ENCODE measurements at regions of chr2 and their contacts with region 1.

Region 1: GRCh38 chr2:190849774-190850173 is 30.8 kb upstream of the GLS start:
- DNase-seq: no peak
- H3K4me3 ChIP-seq: no peak overlapping the region
- H3K27ac ChIP-seq: no peak overlapping the region
- H3K4me1 ChIP-seq: no peaks in the 10 kb centered on the region
- H3K27me3 ChIP-seq: no peaks in the 10 kb centered on the region
- CTCF ChIP-seq: no peak
- EP300 ChIP-seq: no peak
- POLR2A ChIP-seq: no peak
- RAD21 ChIP-seq: no peak

Region 2: GRCh38 chr2:190759749-190760213 is 90.0 kb before region 1 on chr2:
- CTCF ChIA-PET with region 1: no interaction called
- POLR2A ChIA-PET with region 1: no interaction called
- DNase-seq: no peak
- H3K4me3 ChIP-seq: no peak overlapping the region
- H3K27ac ChIP-seq: no peak overlapping the region
- H3K4me1 ChIP-seq: peaks cover 0 to 6% (median 0%) of the 10 kb centered on the region in 4 experiments; a peak in 1 of 7 replicates
- H3K27me3 ChIP-seq: no peaks in the 10 kb centered on the region
- CTCF ChIP-seq: no peak
- EP300 ChIP-seq: no peak
- POLR2A ChIP-seq: no peak
- RAD21 ChIP-seq: no peak

Region 3: GRCh38 chr2:190814968-190815622 is 34.7 kb before region 1 on chr2:
- CTCF ChIA-PET with region 1: interaction called, 11 read pairs
- POLR2A ChIA-PET with region 1: no interaction called
- DNase-seq: no peak
- H3K4me3 ChIP-seq: no peak overlapping the region
- H3K27ac ChIP-seq: no peak overlapping the region
- H3K4me1 ChIP-seq: no peaks in the 10 kb centered on the region
- H3K27me3 ChIP-seq: no peaks in the 10 kb centered on the region
- CTCF ChIP-seq: no peak
- EP300 ChIP-seq: no peak
- POLR2A ChIP-seq: no peak
- RAD21 ChIP-seq: no peak

Region 4: DNA sequence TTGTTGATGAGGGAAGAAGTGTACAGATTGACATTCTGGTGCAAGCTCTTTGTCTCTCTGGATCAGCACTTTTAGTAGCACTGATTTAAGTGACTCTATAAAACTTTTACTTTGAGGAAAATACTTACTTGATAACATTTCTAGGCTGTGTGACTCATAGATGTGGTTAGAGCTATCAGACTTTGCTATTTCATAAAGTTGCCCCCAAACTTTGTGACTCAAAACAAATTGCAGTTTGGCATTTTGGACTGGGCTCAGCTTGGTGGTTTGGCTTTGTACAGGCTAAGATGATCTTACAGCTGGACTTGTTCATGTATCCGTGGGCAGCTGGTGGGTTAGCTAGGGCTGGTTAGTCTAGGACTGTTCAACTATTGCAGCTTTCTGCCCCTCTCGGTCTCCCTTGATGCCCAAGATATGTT is 11.3 kb before region 1 on chr2:
- CTCF ChIA-PET with region 1: interaction called, 16 read pairs
- POLR2A ChIA-PET with region 1: interaction called, 3 read pairs
- DNase-seq: no peak
- H3K4me3 ChIP-seq: no peak overlapping the region
- H3K27ac ChIP-seq: no peak overlapping the region
- H3K4me1 ChIP-seq: no peaks in the 10 kb centered on the region
- H3K27me3 ChIP-seq: no peaks in the 10 kb centered on the region
- CTCF ChIP-seq: no peak
- EP300 ChIP-seq: no peak
- POLR2A ChIP-seq: no peak
- RAD21 ChIP-seq: no peak

Region 5: GRCh38 chr2:190863946-190864345 is 14.2 kb after region 1 on chr2:
- CTCF ChIA-PET with region 1: interaction called, 25 read pairs
- POLR2A ChIA-PET with region 1: interaction called, 3 read pairs
- DNase-seq: no peak
- H3K4me3 ChIP-seq: no peak overlapping the region
- H3K27ac ChIP-seq: no peak overlapping the region
- H3K4me1 ChIP-seq: peaks cover 2 to 14% (median 9%) of the 10 kb centered on the region in 4 experiments; a peak in 6 of 7 replicates
- H3K27me3 ChIP-seq: no peaks in the 10 kb centered on the region
- CTCF ChIP-seq: no peak
- EP300 ChIP-seq: no peak
- POLR2A ChIP-seq: no peak
- RAD21 ChIP-seq: no peak

Region 6: DNA sequence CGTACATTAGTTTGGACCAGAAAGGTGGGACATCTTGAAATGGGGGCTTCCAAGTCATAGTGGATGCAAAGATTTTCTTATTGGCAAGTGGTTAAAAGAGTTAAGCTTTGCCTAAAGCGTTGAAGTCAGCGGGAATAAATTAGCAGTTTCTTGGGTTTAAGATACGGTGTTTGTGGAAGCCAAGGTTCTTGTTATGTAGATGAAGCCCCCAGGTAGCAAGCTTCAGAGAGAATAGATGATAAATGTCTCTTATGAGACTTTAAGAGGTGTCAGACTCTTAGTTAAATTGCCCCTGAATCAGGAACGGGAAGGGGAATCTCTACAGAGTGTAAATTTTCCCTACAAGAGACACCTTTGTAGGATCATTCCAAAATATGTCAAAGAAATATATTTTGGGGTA is 19.9 kb after region 1 on chr2:
- CTCF ChIA-PET with region 1: interaction called, 19 read pairs
- POLR2A ChIA-PET with region 1: interaction called, 6 read pairs
- DNase-seq: no peak
- H3K4me3 ChIP-seq: peak overlapping the region in 1 of 4 experiments; percentile 28; a peak in 1 of 8 replicates
- H3K27ac ChIP-seq: no peak overlapping the region
- H3K4me1 ChIP-seq: peaks cover 0 to 2% (median 0%) of the 10 kb centered on the region in 4 experiments; a peak in 2 of 7 replicates
- H3K27me3 ChIP-seq: no peaks in the 10 kb centered on the region
- CTCF ChIP-seq: no peak
- EP300 ChIP-seq: no peak
- POLR2A ChIP-seq: no peak
- RAD21 ChIP-seq: no peak